Tibial artery (tissue), 4 donors: ENCODE measurements at regions of chr18 and their contacts with region 1.

Region 1: DNA sequence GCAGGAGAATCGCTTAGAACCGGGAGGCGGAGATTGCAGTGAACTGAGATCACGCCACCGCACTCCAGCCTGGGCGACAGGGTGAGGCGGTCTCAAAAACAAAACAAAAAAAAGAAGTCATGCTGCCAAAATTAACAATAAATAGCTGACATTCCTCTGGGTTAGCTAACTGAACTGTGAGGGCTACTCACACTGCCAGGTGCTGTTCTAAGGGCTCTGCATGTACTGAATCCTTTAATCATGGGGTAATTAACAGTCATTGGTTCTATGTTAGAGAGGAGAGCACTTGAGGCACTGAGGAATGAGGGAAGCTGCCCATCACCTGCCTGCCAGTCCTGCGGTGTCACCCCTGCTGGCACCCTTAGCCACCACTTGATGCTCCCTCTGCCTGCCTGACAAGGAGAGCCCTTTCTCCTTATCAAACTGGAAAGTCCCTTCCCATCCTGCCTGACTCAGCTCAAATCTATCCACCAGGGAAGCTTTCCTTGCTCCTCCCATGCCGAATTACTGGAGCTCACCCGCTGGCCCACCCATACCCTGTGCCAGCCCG is 73.0 kb upstream of the RIOK3 start:
- DNase-seq: no peak
- H3K4me3 ChIP-seq: no peak overlapping the region
- H3K27ac ChIP-seq: peak overlapping the region; percentile 38 to 80
- H3K4me1 ChIP-seq: peaks cover 0 to 34% (median 16%) of the 10 kb centered on the region in 4 donors
- H3K27me3 ChIP-seq: no peaks in the 10 kb centered on the region
- CTCF ChIP-seq: no peak

Region 2: DNA sequence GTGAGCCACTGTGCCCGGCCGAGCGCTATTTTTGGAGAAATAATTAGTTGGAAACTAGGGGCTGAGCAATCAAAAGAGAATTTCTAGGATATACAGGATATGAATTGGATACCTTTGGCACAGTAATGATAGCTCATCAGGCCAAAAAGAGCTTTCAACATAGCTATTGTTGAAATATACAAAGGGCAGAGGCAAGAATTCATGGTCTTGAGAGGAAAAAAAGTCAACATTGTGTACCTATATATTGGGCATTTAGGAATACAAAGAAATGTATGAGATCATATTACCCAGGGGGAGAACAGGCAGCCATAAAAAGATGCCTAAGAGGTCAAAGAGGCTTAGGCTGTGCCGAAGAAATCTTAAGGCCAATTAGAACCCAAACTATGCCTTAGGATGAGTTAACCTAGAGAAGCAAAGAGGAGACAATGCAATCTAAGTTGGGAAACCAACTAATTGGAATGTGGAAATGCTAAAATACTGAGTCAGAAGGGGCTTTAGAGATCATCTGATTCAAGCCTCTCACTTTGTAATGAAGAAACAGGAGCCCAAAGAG is 348.0 kb before region 1 on chr18:
- intact Hi-C with region 1: loop called (anchors 10 kb)
- DNase-seq: no peak
- H3K4me3 ChIP-seq: no peak overlapping the region
- H3K27ac ChIP-seq: no peak overlapping the region
- H3K4me1 ChIP-seq: peaks cover 0 to 13% (median 2%) of the 10 kb centered on the region in 4 donors
- H3K27me3 ChIP-seq: no peaks in the 10 kb centered on the region
- CTCF ChIP-seq: no peak

Region 3: GRCh38 chr18:23259701-23260582 is 120.1 kb before region 1 on chr18:
- intact Hi-C with region 1: no loop called
- DNase-seq: peak; percentile 84 to 93
- H3K4me3 ChIP-seq: peak overlapping the region; percentile 26 to 45
- H3K27ac ChIP-seq: peak overlapping the region; percentile 74 to 83
- H3K4me1 ChIP-seq: peaks cover 0 to 27% (median 25%) of the 10 kb centered on the region in 4 donors
- H3K27me3 ChIP-seq: no peaks in the 10 kb centered on the region
- CTCF ChIP-seq: no peak

Region 4: DNA sequence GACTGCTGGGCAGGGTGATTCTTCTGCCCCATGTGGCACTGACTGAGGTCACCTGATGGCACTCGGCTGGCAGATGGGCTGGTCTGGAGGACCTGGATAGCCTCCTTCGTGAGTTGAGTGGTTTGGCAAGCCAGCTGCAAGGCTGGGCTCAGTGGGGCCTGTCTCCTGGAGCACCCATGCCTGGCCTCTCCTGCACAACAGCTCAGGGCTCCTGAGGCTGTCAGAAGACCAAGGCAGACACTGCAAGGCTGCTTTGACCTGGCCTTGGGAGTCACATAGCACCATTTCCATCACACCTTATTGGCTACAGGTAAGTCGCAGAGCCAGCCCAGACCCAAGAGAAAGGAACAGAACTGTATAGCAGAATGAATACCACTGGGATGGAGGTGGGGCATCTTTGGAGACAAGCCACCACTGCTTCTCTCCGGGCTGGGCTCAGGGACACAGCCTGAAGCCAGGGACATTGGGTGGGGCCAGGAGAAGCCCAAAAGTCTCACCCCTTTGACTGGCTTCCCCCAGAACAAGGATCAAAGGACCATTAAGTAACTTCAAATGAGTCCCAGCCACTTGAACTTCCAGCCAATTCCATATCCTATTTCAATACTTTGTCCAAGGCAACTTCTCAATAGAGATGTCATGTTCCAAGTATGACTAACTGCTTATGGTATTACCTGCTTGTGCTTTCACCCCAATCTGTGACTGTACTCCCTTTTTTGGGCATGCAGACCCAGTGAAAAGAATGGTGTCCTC is 88.4 kb before region 1 on chr18:
- intact Hi-C with region 1: no loop called
- DNase-seq: no peak
- H3K4me3 ChIP-seq: no peak overlapping the region
- H3K27ac ChIP-seq: no peak overlapping the region
- H3K4me1 ChIP-seq: peaks cover 0 to 13% (median 6%) of the 10 kb centered on the region in 4 donors
- H3K27me3 ChIP-seq: no peaks in the 10 kb centered on the region
- CTCF ChIP-seq: no peak

Region 5: GRCh38 chr18:23703057-23703986 is 323.2 kb after region 1 on chr18:
- intact Hi-C with region 1: no loop called
- DNase-seq: no peak
- H3K4me3 ChIP-seq: no peak overlapping the region
- H3K27ac ChIP-seq: no peak overlapping the region
- H3K4me1 ChIP-seq: peaks cover 0 to 3% (median 0%) of the 10 kb centered on the region in 4 donors
- H3K27me3 ChIP-seq: peaks cover 0 to 3% of the 10 kb centered on the region in 2 donors
- CTCF ChIP-seq: peak; percentile 27 to 54

Region 6: DNA sequence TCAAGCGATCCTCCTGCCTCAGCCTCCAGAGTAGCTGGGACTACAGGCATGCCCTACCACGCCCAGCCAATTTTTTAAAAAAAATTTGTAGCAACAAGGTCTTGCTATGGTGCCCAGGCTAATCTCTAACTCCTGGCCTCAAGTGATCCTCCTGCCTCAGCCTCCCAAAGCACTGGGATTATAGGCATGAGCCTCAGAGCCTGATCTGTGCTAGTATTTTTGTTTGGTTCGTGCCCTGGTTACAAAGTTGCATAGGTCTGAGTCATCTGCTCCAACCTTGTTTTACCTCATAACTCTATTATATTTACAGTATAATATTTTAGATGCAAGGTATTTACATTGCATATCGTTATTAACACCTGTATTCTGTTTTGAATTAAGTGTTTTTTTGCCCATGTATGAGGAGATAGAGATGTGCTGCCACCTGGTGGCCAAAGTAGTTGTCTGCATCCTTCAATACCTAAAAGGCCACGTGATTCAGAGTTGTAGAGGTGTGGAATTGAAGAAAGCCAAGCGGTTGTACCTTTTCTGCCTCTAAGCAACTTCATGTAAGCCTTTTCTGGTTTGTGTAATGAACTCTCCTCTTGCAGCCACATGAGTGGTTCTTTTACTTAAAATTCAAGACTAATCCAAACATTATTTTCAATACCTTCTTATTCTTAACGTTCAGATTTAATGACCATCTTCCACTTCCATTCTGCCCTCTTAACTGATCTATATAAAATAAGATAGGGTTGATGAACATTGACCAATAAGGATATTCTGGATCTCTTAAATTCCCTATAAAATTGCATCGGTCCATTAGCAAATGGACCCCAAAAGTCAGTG is 738.9 kb after region 1 on chr18:
- intact Hi-C with region 1: no loop called
- DNase-seq: peak; percentile 66 to 82
- H3K4me3 ChIP-seq: no peak overlapping the region
- H3K27ac ChIP-seq: no peak overlapping the region
- H3K4me1 ChIP-seq: no peaks in the 10 kb centered on the region
- H3K27me3 ChIP-seq: no peaks in the 10 kb centered on the region
- CTCF ChIP-seq: peak; percentile 81 to 89